Colonic mucosa (tissue), 4 donors: ENCODE measurements at regions of chrX and their contacts with region 1.

Region 1: DNA sequence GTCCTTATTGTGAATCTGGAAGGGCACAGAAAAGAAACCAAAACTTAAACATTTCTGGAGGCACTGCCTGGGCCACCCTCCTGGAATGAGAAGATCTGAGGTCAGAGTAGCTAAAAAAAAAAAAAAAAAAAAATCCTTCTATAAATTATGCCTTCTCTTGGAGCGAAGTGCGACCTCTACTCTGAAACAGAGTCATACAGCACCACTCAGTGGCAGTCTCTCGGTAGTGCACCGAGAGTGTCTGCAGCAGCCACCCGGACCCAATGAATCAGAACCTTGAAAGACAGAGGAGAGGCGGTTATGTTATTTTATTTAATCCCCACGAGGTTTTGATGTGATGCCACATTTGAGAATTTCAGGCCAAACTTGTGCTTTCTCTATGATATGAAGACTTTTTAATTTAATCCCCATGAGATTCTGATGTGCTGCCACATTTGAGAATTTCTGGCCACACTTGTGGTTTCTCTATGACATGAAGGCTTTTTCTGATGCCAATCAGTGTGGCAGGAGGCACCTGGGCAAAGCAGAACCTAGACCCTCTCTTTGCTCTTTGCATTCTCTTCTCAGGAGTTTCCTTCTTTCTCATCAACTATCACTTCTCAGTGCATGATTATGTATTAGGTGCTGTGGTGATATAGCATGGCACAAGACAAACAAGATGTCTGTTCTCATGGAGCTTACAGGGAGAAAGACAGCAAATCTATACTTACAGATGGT is 5.6 kb upstream of the CT47C1 start:
- DNase-seq: peak; percentile 47
- H3K4me3 ChIP-seq: no peak overlapping the region
- H3K27ac ChIP-seq: no peak overlapping the region
- H3K4me1 ChIP-seq: no peaks in the 10 kb centered on the region
- H3K27me3 ChIP-seq: no peaks in the 10 kb centered on the region
- CTCF ChIP-seq: peak; percentile 39

Region 2: GRCh38 chrX:118839334-118839958 is 227.7 kb before region 1 on chrX:
- intact Hi-C with region 1: loop called (anchors 5 kb)
- DNase-seq: peak; percentile 87
- H3K4me3 ChIP-seq: peak overlapping the region; percentile 32
- H3K27ac ChIP-seq: no peak overlapping the region
- H3K4me1 ChIP-seq: no peaks in the 10 kb centered on the region
- H3K27me3 ChIP-seq: peaks cover 3% of the 10 kb centered on the region
- CTCF ChIP-seq: peak; percentile 64

Region 3: GRCh38 chrX:118884552-118885138 is 182.5 kb before region 1 on chrX:
- intact Hi-C with region 1: no loop called
- DNase-seq: peak; percentile 38
- H3K4me3 ChIP-seq: no peak overlapping the region
- H3K27ac ChIP-seq: no peak overlapping the region
- H3K4me1 ChIP-seq: no peaks in the 10 kb centered on the region
- H3K27me3 ChIP-seq: no peaks in the 10 kb centered on the region
- CTCF ChIP-seq: no peak

Region 4: GRCh38 chrX:119105826-119106225 is 38.6 kb after region 1 on chrX:
- intact Hi-C with region 1: no loop called
- DNase-seq: no peak
- H3K4me3 ChIP-seq: no peak overlapping the region
- H3K27ac ChIP-seq: no peak overlapping the region
- H3K4me1 ChIP-seq: no peaks in the 10 kb centered on the region
- H3K27me3 ChIP-seq: no peaks in the 10 kb centered on the region
- CTCF ChIP-seq: no peak

Region 5: DNA sequence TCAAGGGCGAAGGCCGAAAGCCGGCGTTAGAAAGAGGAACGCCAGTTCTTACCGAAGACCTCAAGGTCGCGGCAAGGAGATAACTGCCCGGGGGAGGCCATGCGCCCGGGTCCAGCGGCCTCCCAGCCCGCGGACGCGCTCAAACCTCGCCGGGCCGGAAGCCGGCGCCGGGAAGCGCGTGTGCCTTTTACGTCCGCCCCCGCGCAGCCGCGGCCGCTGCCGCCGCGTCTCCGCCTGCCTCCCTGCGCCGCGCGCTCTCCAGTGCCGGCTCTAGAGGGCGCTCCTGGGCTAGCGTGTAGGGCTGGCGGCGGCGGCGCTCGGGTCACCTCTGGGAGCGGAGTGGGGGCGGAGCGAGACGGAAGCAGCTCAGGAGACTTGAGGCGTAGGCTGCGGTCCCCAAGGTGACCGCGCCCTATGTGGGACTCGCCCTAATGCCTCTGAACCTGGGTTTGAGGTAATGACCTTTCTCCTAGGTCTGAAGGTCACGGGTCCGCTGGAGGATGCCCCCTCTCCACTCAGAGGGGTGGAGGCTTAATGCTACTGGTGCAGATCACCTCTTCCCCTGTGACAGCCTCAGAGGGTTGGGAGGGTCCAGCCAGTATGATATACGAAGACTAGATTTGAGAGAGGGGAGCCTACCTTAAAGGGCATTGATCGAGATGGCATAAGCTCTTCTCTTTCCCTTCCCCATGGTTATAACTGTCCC is 401.9 kb after region 1 on chrX:
- intact Hi-C with region 1: no loop called
- DNase-seq: peak; percentile 90
- H3K4me3 ChIP-seq: peak overlapping the region; percentile 62
- H3K27ac ChIP-seq: peak overlapping the region; percentile 90
- H3K4me1 ChIP-seq: no peaks in the 10 kb centered on the region
- H3K27me3 ChIP-seq: no peaks in the 10 kb centered on the region
- CTCF ChIP-seq: peak; percentile 53